Activated naive CD4-positive, alpha-beta T cell treated with anti-CD3 and anti-CD28 coated beads for 36 hours (primary cell): ENCODE measurements at regions of chr11 and their contacts with region 1.

Region 1: GRCh38 chr11:48020092-48020755 is 39.9 kb downstream of the PTPRJ start:
- DNase-seq: peak; percentile 61
- H3K4me3 Mint-ChIP-seq: no peak overlapping the region
- H3K27ac Mint-ChIP-seq: peak overlapping the region; percentile 61
- H3K4me1 Mint-ChIP-seq: peaks cover 64% of the 10 kb centered on the region
- H3K27me3 Mint-ChIP-seq: no peaks in the 10 kb centered on the region

Region 2: GRCh38 chr11:47981667-47982404 is 38.4 kb before region 1 on chr11:
- CTCF ChIA-PET with region 1: interaction called, 3 read pairs
- intact Hi-C with region 1: loop called (anchors 1 kb)
- DNase-seq: peak; percentile 38
- H3K4me3 Mint-ChIP-seq: peak overlapping the region; percentile 82
- H3K27ac Mint-ChIP-seq: peak overlapping the region; percentile 42
- H3K4me1 Mint-ChIP-seq: peaks cover 39% of the 10 kb centered on the region
- H3K27me3 Mint-ChIP-seq: peaks cover 3% of the 10 kb centered on the region

Region 3: DNA sequence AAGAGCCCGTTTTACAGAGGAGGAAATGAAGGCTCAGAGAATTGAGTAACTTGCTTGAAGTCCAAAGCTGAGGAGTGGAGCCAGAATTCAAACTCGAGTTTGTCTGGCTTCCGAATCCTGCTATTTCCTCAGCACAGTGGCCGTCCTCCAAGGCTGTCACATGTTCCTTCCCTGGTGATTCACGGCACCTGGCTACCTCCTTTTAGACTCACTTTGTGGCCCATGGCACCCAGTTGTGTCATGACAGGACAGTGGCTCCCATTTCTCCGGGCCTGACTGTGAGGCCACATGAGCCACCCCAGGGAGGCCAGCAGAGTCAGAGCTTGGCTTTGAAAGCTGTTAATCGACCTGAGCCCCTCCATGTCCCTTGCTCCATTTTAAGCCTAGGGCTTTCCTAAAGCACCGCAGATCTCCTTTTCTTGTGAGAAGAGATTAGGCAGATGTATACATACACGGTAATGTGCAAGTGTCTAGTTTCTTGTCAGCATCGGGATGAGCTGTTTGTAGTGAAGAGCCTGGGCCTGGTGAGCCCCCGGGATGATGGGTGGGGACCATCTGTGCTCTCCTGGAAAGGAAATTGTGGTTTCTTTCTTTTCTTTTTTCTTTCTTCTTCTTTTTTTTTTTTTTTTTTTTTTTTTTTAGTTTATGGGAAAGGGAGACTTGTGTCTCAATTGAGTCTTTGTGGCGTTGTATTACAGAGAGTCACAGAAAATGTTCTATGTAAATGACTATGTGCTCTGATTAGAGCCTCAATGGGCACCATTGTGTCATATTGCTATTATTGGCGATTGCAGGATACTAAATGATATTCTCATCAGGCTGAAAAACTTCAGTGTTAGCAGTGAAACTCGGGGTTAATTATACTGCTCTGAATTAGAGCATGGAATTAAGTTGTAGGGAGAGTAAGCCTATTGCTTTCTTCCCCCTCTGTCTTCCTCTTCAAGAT is 15.0 kb after region 1 on chr11:
- CTCF ChIA-PET with region 1: no interaction called
- intact Hi-C with region 1: loop called (anchors 1 kb)
- DNase-seq: no peak
- H3K4me3 Mint-ChIP-seq: no peak overlapping the region
- H3K27ac Mint-ChIP-seq: no peak overlapping the region
- H3K4me1 Mint-ChIP-seq: peaks cover 66% of the 10 kb centered on the region
- H3K27me3 Mint-ChIP-seq: no peaks in the 10 kb centered on the region